ENCODE measurements at regions of chr4 and their contacts with region 1.

Region 1: DNA sequence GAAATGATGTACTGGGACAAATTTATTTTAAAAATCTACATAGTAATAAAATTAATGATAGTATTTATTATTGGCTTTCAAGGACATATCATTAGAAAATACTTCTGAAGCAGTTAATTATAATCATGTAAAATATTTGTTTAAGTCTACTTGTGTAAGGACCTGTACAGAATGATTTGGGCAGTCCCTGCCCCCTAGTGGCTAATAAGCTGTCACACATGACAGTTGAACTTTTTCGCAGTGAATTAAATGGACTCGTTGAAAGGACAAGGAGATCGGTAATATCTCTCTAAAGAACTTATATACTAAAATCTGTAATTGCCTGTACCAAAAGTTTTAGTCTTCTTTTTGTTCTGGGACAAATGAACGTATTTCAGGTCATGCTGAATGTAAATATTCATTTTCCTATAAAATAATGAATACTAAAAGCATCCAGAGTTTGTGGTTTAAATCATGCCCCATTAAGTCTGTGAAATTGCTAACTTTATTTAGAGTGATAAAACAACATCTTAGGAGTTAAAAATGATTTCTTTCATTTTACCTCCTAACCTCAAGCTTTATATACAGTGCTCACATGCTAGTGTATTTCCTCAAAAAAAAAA is 13.6 kb downstream of the EXOC1 start:
- DNase-seq: peak; percentile 33
- H3K4me3 Mint-ChIP-seq: no peak overlapping the region
- H3K27ac Mint-ChIP-seq: peak overlapping the region; percentile 46
- H3K4me1 Mint-ChIP-seq: peaks cover 21% of the 10 kb centered on the region
- H3K27me3 Mint-ChIP-seq: no peaks in the 10 kb centered on the region

Region 2: GRCh38 chr4:55395529-55396307 is 471.4 kb before region 1 on chr4 and contains the start of gene TMEM165:
- CTCF ChIA-PET with region 1: interaction called, 3 read pairs
- POLR2A ChIA-PET with region 1: no interaction called
- intact Hi-C with region 1: loop called (anchors 5 kb)
- DNase-seq: peak; percentile 94
- H3K4me3 Mint-ChIP-seq: peak within 1 kb of the TSS; percentile 90
- H3K27ac Mint-ChIP-seq: peak within 1 kb of the TSS; percentile 93
- H3K4me1 Mint-ChIP-seq: peaks cover 30% of the 10 kb centered on the region
- H3K27me3 Mint-ChIP-seq: no peaks in the 10 kb centered on the region
- total RNA-seq, gene TMEM165: 50.4 to 56.8 TPM

Region 3: GRCh38 chr4:55758570-55758969 is 108.5 kb before region 1 on chr4:
- CTCF ChIA-PET with region 1: interaction called, 4 read pairs
- POLR2A ChIA-PET with region 1: no interaction called
- intact Hi-C with region 1: loop called (anchors 2 kb)
- DNase-seq: no peak
- H3K4me3 Mint-ChIP-seq: no peak overlapping the region
- H3K27ac Mint-ChIP-seq: no peak overlapping the region
- H3K4me1 Mint-ChIP-seq: no peaks in the 10 kb centered on the region
- H3K27me3 Mint-ChIP-seq: no peaks in the 10 kb centered on the region

Region 4: GRCh38 chr4:55791666-55792065 is 75.4 kb before region 1 on chr4:
- CTCF ChIA-PET with region 1: no interaction called
- POLR2A ChIA-PET with region 1: no interaction called
- intact Hi-C with region 1: loop called (anchors 2 kb)
- DNase-seq: no peak
- H3K4me3 Mint-ChIP-seq: no peak overlapping the region
- H3K27ac Mint-ChIP-seq: no peak overlapping the region
- H3K4me1 Mint-ChIP-seq: no peaks in the 10 kb centered on the region
- H3K27me3 Mint-ChIP-seq: peaks cover 28% of the 10 kb centered on the region

Region 5: GRCh38 chr4:55853484-55854046 is 13.5 kb before region 1 on chr4 and contains the start of gene EXOC1:
- CTCF ChIA-PET with region 1: interaction called, 7 read pairs
- POLR2A ChIA-PET with region 1: no interaction called
- intact Hi-C with region 1: loop called (anchors 1 kb)
- DNase-seq: peak; percentile 99
- H3K4me3 Mint-ChIP-seq: peak within 1 kb of the TSS; percentile 7
- H3K27ac Mint-ChIP-seq: peak within 1 kb of the TSS; percentile 82
- H3K4me1 Mint-ChIP-seq: peaks cover 33% of the 10 kb centered on the region
- H3K27me3 Mint-ChIP-seq: no peaks in the 10 kb centered on the region
- total RNA-seq, gene EXOC1: 21.9 to 22.4 TPM

Region 6: GRCh38 chr4:55933611-55934010 is 66.5 kb after region 1 on chr4:
- CTCF ChIA-PET with region 1: no interaction called
- POLR2A ChIA-PET with region 1: no interaction called
- intact Hi-C with region 1: no loop called
- DNase-seq: no peak
- H3K4me3 Mint-ChIP-seq: no peak overlapping the region
- H3K27ac Mint-ChIP-seq: no peak overlapping the region
- H3K4me1 Mint-ChIP-seq: no peaks in the 10 kb centered on the region
- H3K27me3 Mint-ChIP-seq: no peaks in the 10 kb centered on the region

Region 7: DNA sequence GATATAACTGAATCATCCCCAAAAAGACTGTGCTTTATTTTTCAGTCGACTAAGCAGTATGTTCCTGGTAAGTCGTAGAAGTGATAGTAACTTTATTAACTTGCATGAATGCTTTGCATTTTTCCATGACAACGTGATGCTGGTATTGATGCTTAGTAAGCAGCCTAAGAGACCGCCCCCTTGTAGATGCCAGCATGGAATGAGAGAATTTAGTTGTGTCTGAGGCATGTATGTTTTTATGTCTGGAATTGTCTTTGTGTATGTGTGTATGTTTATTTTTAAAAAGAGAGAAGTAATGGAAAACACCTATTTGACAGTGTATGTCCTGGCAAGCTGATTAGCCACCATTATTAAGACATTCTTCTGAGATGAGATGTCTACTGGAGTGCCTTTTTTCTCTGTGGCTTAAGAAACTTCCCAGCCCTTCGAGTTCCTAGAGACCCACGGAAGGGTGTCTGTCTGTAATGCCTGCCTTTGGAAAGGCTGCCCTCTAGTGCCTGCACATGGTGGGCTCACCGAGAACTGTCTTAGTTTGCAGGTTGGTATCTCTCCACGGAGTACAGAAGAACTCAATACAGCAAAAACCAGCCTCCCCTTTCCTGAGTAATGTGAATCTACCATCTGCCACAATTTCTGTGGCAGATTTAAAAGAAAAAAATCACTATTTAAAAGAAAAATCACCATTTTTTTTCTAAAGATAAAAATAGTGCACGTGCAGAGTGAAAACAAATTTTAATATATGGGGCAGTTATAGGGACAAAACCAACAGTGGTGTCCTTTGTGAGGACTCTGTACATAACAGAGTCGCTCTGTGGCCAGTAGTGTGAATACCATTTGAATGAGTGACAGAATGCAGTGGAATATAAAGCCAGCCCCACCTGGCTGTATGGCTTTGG is 434.4 kb after region 1 on chr4:
- CTCF ChIA-PET with region 1: interaction called, 4 read pairs
- POLR2A ChIA-PET with region 1: no interaction called
- intact Hi-C with region 1: loop called (anchors 5 kb)
- DNase-seq: peak; percentile 78
- H3K4me3 Mint-ChIP-seq: peak overlapping the region; percentile 13
- H3K27ac Mint-ChIP-seq: no peak overlapping the region
- H3K4me1 Mint-ChIP-seq: peaks cover 7% of the 10 kb centered on the region
- H3K27me3 Mint-ChIP-seq: no peaks in the 10 kb centered on the region